Activated CD8-positive, alpha-beta T cell treated with anti-CD3 and anti-CD28 coated beads for 36 hours (primary cell): ENCODE measurements at regions of chr1 and their contacts with region 1.

Region 1: GRCh38 chr1:32286763-32287162 is 5.1 kb upstream of the HDAC1 start:
- DNase-seq: no peak
- ATAC-seq: no peak
- H3K4me3 Mint-ChIP-seq: no peak overlapping the region
- H3K27ac Mint-ChIP-seq: no peak overlapping the region
- H3K4me1 Mint-ChIP-seq: peaks cover 12% of the 10 kb centered on the region
- H3K27me3 Mint-ChIP-seq: no peaks in the 10 kb centered on the region
- CTCF ChIP-seq: no peak

Region 2: DNA sequence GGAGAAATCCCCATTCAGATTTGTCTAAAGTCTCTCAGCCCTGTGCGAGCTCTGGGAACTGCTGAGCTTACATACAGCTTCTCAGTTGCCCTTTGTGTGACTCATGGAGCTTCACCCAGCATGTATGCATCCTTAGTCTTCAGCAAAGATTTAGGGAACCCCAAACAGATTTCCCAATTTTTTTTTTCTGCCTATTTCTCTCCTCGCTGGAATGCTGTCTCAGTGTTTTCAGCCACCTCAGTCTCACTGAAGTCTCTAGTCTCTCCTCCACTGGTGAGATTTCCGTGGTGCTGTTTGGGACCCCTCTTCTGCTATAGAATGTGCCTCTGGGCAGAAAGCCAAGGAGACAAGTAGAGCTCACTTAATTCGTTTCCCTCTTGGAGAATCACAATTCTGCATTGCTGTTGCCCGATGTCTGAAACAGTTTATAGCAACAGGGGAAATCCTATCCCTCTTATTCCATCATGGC is 135.4 kb before region 1 on chr1:
- CTCF ChIA-PET with region 1: no interaction called
- POLR2A ChIA-PET with region 1: no interaction called
- intact Hi-C with region 1: no loop called
- DNase-seq: no peak
- ATAC-seq: no peak
- H3K4me3 Mint-ChIP-seq: no peak overlapping the region
- H3K27ac Mint-ChIP-seq: no peak overlapping the region
- H3K4me1 Mint-ChIP-seq: peaks cover 16% of the 10 kb centered on the region
- H3K27me3 Mint-ChIP-seq: no peaks in the 10 kb centered on the region
- CTCF ChIP-seq: no peak

Region 3: DNA sequence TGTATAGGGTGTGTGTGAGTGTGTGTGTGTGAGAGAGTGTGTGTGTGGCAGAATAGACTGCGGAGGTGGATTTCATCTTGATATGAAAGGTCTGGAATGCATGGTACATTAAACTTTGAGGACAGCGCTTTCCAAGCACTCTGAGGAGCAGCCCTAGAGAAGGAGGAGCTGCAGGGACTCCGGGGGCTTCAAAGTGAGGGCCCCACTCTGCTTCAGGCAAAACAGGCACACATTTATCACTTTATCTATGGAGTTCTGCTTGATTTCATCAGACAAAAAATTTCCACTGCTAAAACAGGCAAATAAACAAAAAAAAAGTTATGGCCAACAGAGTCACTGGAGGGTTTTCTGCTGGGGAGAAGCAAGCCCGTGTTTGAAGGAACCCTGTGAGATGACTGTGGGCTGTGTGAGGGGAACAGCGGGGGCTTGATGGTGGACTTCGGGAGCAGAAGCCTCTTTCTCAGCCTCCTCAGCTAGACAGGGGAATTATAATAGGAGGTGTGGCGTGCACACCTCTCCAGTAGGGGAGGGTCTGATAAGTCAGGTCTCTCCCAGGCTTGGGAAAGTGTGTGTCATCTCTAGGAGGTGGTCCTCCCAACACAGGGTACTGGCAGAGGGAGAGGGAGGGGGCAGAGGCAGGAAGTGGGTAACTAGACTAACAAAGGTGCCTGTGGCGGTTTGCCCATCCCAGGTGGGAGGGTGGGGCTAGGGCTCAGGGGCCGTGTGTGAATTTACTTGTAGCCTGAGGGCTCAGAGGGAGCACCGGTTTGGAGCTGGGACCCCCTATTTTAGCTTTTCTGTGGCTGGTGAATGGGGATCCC is 13.2 kb before region 1 on chr1:
- CTCF ChIA-PET with region 1: interaction called, 4 read pairs
- POLR2A ChIA-PET with region 1: interaction called, 10 read pairs
- intact Hi-C with region 1: no loop called
- DNase-seq: peak; percentile 95
- ATAC-seq: peak; percentile 93
- H3K4me3 Mint-ChIP-seq: peak overlapping the region; percentile 68
- H3K27ac Mint-ChIP-seq: peak overlapping the region; percentile 89
- H3K4me1 Mint-ChIP-seq: peaks cover 58% of the 10 kb centered on the region
- H3K27me3 Mint-ChIP-seq: no peaks in the 10 kb centered on the region
- CTCF ChIP-seq: no peak

Region 4: DNA sequence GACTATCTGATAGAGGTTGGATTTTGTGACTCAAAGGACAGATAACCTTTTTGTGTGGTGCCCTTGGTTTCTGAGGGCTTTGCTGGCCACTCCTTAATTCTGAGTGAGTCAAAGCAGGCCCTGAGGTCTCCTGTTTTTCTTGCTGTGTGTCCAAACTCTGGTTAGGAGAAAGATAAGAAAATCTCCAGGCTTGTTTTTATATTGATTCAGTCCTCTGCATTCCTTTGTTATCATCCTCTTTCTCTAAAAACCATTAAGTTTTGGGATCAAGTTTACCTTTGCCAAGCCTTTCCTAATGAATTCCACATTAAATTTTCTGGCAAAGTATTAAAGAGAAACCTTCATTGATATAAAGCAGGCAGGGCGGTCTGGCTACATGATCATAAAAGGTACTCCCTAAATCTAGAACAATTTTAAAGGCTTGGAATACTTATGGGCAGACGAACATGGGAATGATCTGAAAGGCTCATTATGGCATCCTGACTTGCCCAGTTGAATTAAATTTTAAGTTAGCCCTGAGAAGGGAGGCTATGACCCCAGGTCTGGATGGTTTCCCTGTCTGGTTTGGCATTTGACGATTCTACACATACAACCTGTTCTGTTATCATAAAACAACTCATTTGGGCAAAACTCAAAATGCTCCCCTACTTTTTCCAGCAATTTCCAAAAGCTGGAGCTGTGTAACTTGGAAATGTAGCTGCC is 198.9 kb after region 1 on chr1:
- CTCF ChIA-PET with region 1: no interaction called
- POLR2A ChIA-PET with region 1: no interaction called
- intact Hi-C with region 1: no loop called
- DNase-seq: no peak
- ATAC-seq: no peak
- H3K4me3 Mint-ChIP-seq: no peak overlapping the region
- H3K27ac Mint-ChIP-seq: no peak overlapping the region
- H3K4me1 Mint-ChIP-seq: no peaks in the 10 kb centered on the region
- H3K27me3 Mint-ChIP-seq: peaks cover 9% of the 10 kb centered on the region
- CTCF ChIP-seq: no peak